Activated T-helper 1 cell treated with anti-CD3 and anti-CD28 coated beads, Interleukin-12 subunit alpha, Interleukin-12 subunit beta, Interleukin-2, Interleukin-4 antibody, amounts not matched to agents 30 ng/mL and 10 ng/mL and 1 ng/mL, durations not matched to agents 14 hours and 24 hours and 36 hours (primary cell): ENCODE measurements at regions of chr6 and their contacts with region 1.

Region 1: DNA sequence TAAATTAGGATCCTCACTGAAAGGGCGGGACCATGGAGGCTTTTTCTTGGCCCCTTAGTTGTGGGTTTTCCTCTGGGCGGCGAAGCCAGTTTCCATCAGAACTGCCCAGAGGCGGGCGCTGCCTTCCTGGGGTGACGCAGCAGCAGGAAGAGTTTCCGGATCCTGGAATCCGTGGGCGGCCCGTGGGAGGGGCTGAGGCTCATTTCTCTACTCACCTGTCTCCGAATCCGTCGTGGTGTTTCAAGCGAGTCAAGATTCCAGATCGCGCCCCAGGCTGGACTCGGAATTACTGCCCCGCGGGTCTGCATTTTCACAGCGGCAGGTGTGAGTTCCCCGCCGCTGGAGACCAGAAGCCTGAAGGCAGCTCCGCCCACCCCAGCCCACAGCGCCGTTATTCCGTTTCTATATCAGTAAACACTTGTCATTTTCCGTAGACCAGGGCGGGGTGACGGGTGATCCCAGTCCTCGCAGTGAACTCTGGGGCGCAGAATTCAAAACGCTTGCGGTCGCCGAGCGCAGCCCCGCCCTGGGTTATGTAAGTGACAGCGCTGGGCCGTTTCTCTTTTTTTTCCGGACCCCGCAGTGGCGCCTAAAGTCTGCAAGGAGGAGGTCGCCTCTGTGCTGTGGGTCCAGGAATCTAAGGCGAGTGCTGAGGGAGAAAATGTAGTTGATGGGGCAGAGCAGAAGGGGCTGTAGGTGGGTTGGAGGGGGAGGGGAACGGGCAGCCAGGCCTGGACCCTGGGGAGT is 27.2 kb upstream of the POU5F1 start:
- DNase-seq: peak; percentile 92
- H3K4me3 Mint-ChIP-seq: peak overlapping the region; percentile 98
- H3K27ac Mint-ChIP-seq: peak overlapping the region; percentile 99
- H3K4me1 Mint-ChIP-seq: peaks cover 53% of the 10 kb centered on the region
- H3K27me3 Mint-ChIP-seq: no peaks in the 10 kb centered on the region

Region 2: GRCh38 chr6:31139599-31139998 is 58.1 kb before region 1 on chr6:
- intact Hi-C with region 1: loop called (anchors 1 kb)
- DNase-seq: no peak
- H3K4me3 Mint-ChIP-seq: no peak overlapping the region
- H3K27ac Mint-ChIP-seq: no peak overlapping the region
- H3K4me1 Mint-ChIP-seq: peaks cover 8% of the 10 kb centered on the region
- H3K27me3 Mint-ChIP-seq: peaks cover 3% of the 10 kb centered on the region

Region 3: GRCh38 chr6:31356946-31357466 is 159.3 kb after region 1 on chr6 and contains the start of gene HLA-B:
- intact Hi-C with region 1: loop called (anchors 1 kb)
- DNase-seq: peak; percentile 67
- H3K4me3 Mint-ChIP-seq: peak within 1 kb of the TSS; percentile 95
- H3K27ac Mint-ChIP-seq: peak within 1 kb of the TSS; percentile 95
- H3K4me1 Mint-ChIP-seq: peaks cover 64% of the 10 kb centered on the region
- H3K27me3 Mint-ChIP-seq: peaks cover 8% of the 10 kb centered on the region
- total RNA-seq, gene HLA-B: 3,770 and 3,814 TPM in 2 replicates

Region 4: GRCh38 chr6:31403283-31403989 is 205.7 kb after region 1 on chr6 and contains the start of gene MICA:
- intact Hi-C with region 1: loop called (anchors 1 kb)
- DNase-seq: peak; percentile 66
- H3K4me3 Mint-ChIP-seq: peak within 1 kb of the TSS; percentile 84
- H3K27ac Mint-ChIP-seq: peak within 1 kb of the TSS; percentile 84
- H3K4me1 Mint-ChIP-seq: peaks cover 54% of the 10 kb centered on the region
- H3K27me3 Mint-ChIP-seq: peaks cover 2% of the 10 kb centered on the region
- total RNA-seq, gene MICA: 11.5 and 12.4 TPM in 2 replicates

Region 5: DNA sequence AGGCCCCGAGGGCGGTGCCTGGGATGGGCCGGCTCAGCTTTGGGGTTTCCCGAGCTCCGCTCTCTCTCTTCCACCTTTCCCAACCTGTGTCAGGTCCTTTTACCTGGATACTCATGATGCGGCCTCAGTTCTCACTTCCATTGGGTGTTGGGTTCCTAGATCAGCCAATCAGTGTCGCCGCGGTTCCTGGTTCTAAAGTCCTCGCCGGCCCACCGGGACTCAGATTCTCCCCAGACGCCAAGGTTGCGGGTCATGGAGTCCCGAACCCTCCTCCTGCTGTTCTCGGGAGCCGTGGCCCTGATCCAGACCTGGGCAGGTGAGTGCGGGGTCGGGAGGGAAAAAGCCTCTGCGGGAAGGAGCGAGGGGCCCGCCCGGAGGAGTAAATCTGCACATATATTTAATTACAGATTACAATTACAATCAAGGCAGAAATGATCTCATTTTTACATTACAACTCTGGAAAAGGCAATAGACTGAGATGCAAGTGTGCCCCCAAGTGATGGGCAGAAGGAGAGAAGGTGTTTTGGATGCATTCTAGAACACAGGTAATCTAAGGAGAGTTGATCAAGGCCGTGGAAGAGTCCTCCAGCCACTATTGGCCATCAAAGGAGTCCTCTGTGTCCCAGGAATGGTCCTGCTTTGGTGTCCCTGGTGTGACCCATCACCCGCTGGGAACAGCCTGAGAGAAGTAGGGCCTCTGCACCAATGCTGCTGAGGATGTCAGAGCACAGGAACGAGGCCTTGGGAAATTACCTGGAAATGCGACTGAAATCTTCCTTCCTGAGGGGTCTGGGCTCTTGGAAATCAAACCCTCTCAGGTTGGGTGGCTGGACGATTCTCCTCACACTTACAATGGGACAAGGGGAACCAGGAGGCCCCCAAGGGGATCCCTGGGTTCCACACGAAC is 265.5 kb after region 1 on chr6:
- intact Hi-C with region 1: loop called (anchors 1 kb)
- DNase-seq: peak; percentile 90
- H3K4me3 Mint-ChIP-seq: peak overlapping the region; percentile 100
- H3K27ac Mint-ChIP-seq: peak overlapping the region; percentile 87
- H3K4me1 Mint-ChIP-seq: peaks cover 63% of the 10 kb centered on the region
- H3K27me3 Mint-ChIP-seq: peaks cover 9% of the 10 kb centered on the region

Region 6: GRCh38 chr6:31575335-31575901 is 377.7 kb after region 1 on chr6 and contains the start of gene TNF:
- intact Hi-C with region 1: loop called (anchors 5 kb)
- DNase-seq: peak; percentile 85
- H3K4me3 Mint-ChIP-seq: peak within 1 kb of the TSS; percentile 92
- H3K27ac Mint-ChIP-seq: peak within 1 kb of the TSS; percentile 81
- H3K4me1 Mint-ChIP-seq: peaks cover 81% of the 10 kb centered on the region
- H3K27me3 Mint-ChIP-seq: peaks cover 2% of the 10 kb centered on the region
- total RNA-seq, gene TNF: 427 and 430 TPM in 2 replicates